AG04450 (cell line): ENCODE measurements at regions of chr2 and their contacts with region 1.

Region 1: DNA sequence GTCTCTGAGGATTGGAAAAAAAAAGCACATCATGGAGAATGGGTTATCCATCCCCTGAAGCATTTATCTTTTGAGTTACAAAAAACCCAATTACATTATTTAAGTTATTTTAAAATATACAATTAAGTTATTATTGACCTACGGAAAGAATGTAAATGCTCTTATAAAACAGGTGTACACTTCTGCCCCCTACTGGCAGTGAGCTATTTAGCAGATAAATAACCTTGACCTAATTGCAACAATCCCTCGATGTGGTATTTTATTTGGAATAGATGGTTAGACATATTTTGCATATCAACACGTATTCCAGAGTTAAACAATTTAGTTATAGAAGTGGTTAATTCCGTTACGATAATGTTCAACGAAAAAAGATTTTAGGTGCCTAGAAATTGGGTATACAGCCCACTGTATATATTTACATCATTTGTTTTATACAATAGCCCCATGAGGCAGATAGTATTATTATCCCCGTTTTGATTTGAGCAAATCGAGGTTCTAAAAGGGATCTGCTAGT is 9.1 kb upstream of the DAW1 start:
- DNase-seq: no peak
- H3K4me3 ChIP-seq: no peak overlapping the region
- H3K27ac ChIP-seq: no peak overlapping the region
- H3K27me3 ChIP-seq: no peaks in the 10 kb centered on the region
- CTCF ChIP-seq: peak; percentile 66

Region 2: GRCh38 chr2:227789803-227790202 is 72.5 kb before region 1 on chr2:
- CTCF ChIA-PET with region 1: no interaction called
- POLR2A ChIA-PET with region 1: no interaction called
- DNase-seq: no peak
- H3K4me3 ChIP-seq: no peak overlapping the region
- H3K27ac ChIP-seq: no peak overlapping the region
- H3K27me3 ChIP-seq: no peaks in the 10 kb centered on the region
- CTCF ChIP-seq: no peak

Region 3: DNA sequence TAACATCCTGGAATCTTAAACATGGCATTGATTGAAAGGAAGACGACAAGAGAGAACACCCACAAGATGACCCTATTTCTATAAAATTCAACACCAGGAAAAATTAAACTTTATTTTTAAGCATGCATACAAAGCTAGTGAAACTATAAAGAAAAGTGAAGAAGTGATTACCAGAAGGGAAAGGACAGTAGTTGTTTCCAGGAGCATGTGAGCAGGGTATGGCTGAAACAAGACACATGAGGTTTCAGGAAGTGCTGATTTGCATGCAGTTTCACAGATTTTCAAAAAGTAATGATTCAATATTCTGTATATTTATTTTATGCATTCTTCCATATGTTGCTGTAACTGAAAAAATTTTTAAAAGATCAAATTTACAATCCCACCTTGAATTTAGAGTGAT is 15.5 kb before region 1 on chr2:
- CTCF ChIA-PET with region 1: interaction called, 13 read pairs
- POLR2A ChIA-PET with region 1: no interaction called
- DNase-seq: no peak
- H3K4me3 ChIP-seq: no peak overlapping the region
- H3K27ac ChIP-seq: no peak overlapping the region
- H3K27me3 ChIP-seq: no peaks in the 10 kb centered on the region
- CTCF ChIP-seq: no peak

Region 4: DNA sequence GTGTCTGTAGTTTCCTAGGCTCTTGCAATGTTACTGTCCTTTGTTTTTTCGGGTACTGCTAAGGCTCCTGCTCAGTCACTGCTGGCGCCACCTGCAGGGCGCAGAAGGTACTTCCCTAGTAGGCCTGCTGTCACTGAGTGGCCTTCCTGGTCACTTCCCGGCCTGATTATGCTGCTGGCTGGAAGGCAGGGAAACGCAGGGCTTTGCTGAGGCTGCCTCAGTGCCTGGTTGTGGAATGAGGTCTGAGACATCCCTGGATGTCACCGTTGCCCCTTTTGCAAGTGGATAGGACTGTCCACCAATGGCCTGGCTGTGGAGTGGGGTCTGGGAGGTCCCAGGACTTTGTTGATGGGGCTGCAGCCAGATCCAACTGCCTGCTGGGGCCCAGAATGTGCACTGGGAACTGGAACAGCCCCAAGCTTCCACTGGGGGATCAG is 22.2 kb after region 1 on chr2:
- CTCF ChIA-PET with region 1: interaction called, 24 read pairs
- POLR2A ChIA-PET with region 1: no interaction called
- DNase-seq: peak; percentile 27
- H3K4me3 ChIP-seq: no peak overlapping the region
- H3K27ac ChIP-seq: no peak overlapping the region
- H3K27me3 ChIP-seq: no peaks in the 10 kb centered on the region
- CTCF ChIP-seq: peak; percentile 91